HEK293 (cell line): ENCODE measurements at regions of chr18 and their contacts with region 1.

Region 1: GRCh38 chr18:76803814-76804213 is 18.5 kb upstream of the ZNF236 start:
- H3K4me3 ChIP-seq: no peak overlapping the region
- H3K27ac ChIP-seq: no peak overlapping the region
- H3K4me1 ChIP-seq: 0 out of 2 replicates have a peak, but pooled peaks cover 3% of the 10 kb centered on the region
- CTCF ChIP-seq: peak; percentile 90

Region 2: GRCh38 chr18:76544511-76545345 is 259.1 kb before region 1 on chr18:
- CTCF ChIA-PET with region 1: no interaction called
- POLR2A ChIA-PET with region 1: no interaction called
- H3K4me3 ChIP-seq: no peak overlapping the region
- H3K27ac ChIP-seq: no peak overlapping the region
- H3K4me1 ChIP-seq: peaks cover 3% of the 10 kb centered on the region; the same call in 1 of the 2 replicates
- CTCF ChIP-seq: no peak

Region 3: GRCh38 chr18:76654577-76654976 is 149.2 kb before region 1 on chr18:
- CTCF ChIA-PET with region 1: no interaction called
- POLR2A ChIA-PET with region 1: no interaction called
- H3K4me3 ChIP-seq: no peak overlapping the region
- H3K27ac ChIP-seq: no peak overlapping the region
- H3K4me1 ChIP-seq: peaks cover 5% of the 10 kb centered on the region; the same call in 1 of the 2 replicates
- CTCF ChIP-seq: no peak

Region 4: DNA sequence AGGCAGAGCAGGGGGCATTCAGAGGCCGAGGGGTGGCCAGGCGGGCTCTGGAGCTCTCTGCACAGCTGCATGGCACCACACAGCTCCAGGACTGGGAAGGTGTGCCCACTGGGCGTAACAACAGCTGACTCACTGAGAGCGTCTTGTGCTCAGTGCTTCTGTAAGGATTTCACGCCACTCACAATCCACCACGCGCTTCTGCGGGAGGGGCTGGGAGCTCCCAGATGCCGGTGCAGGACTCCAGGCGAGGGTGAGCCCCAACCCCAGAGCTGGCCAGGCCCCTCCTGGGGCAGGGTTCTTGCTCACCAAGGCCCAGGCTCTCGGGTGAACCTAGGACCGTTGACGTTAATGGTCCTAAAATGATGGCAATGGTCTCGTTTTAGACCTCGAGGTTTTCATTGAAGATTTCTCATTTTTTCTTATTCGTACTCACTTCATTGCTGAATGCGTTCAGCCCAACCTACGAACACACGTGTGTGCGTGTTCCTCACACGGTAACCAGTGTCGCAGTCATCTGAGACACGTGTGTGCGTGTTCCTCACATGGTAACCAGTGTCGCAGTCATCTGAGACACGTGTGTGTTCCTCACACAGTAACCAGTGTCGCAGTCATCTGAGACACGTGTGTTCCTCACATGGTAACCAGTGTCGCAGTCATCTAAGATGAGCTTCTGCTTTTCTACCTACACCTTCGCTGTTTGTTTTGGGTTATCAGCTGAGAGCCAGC is 19.9 kb before region 1 on chr18:
- CTCF ChIA-PET with region 1: interaction called, 52 read pairs
- POLR2A ChIA-PET with region 1: interaction called, 4 read pairs
- H3K4me3 ChIP-seq: no peak overlapping the region
- H3K27ac ChIP-seq: no peak overlapping the region
- H3K4me1 ChIP-seq: no peaks in the 10 kb centered on the region
- CTCF ChIP-seq: no peak

Region 5: DNA sequence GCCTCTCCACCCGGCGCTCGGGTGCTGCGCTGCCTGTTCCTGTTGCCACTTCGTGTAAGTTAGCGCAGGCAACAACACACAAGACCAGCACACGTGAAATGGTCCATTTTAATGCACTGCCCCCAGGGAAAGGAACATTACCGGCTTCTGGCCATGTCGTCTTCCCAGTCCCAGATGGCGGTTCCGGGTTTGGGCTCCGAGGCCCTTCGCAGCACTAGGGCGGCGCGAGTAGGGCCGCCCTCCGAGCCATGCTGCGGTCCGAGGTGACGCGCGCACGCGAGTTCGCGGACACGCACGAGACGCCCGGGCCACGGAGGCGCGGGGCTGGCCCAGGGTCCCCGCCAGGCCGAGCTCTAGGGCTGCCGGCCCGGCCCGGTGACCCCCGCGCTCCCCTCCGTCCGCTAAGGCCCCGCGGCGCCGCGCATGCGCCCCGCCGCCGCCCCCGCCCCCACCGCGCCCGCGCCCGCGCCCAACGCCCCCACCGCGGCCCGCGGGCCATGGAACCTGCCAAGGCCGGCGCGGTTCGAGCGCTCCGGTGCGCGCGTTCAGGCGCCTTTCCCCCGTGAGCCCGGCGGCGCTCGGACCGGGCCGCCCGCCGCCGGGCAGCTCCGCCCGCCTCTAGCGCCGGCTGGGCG is 18.2 kb after region 1 on chr18:
- CTCF ChIA-PET with region 1: interaction called, 67 read pairs
- POLR2A ChIA-PET with region 1: interaction called, 4 read pairs
- H3K4me3 ChIP-seq: peak overlapping the region; percentile 62
- H3K27ac ChIP-seq: peak overlapping the region; percentile 98
- H3K4me1 ChIP-seq: peaks cover 5% of the 10 kb centered on the region; the same call in 1 of the 2 replicates
- CTCF ChIP-seq: no peak

Region 6: GRCh38 chr18:76838182-76838581 is 34.4 kb after region 1 on chr18:
- CTCF ChIA-PET with region 1: interaction called, 17 read pairs
- POLR2A ChIA-PET with region 1: no interaction called
- H3K4me3 ChIP-seq: no peak overlapping the region
- H3K27ac ChIP-seq: peak overlapping the region; percentile 34; the same call in 1 of the 2 replicates
- H3K4me1 ChIP-seq: peaks cover 24% of the 10 kb centered on the region
- CTCF ChIP-seq: no peak

Region 7: DNA sequence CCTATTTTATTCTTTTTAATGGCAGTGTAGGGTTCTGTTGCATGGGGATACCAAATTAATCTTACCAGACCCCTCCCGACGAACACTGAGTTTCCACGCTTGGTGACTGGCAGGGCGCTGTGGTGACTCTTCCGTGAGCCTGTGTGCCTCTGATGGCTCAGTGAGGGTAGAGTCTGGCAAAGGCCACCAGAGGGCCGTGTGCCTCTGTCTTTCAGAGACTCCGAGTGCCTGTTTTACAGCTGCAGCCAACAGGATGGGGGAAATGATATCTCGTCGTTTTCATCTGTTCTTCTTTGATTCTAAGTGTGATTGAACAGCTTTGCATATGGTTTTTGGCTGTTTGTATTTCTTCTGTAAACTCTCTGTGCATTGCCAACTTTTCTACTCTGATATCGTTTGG is 118.3 kb after region 1 on chr18:
- CTCF ChIA-PET with region 1: interaction called, 13 read pairs
- POLR2A ChIA-PET with region 1: no interaction called
- H3K4me3 ChIP-seq: no peak overlapping the region
- H3K27ac ChIP-seq: no peak overlapping the region
- H3K4me1 ChIP-seq: no peaks in the 10 kb centered on the region
- CTCF ChIP-seq: peak; percentile 55; the same call in 1 of the 2 replicates

Region 8: GRCh38 chr18:77000527-77000926 is 196.7 kb after region 1 on chr18:
- CTCF ChIA-PET with region 1: interaction called, 15 read pairs
- POLR2A ChIA-PET with region 1: no interaction called
- H3K4me3 ChIP-seq: no peak overlapping the region
- H3K27ac ChIP-seq: no peak overlapping the region
- H3K4me1 ChIP-seq: peaks cover 3% of the 10 kb centered on the region
- CTCF ChIP-seq: peak; percentile 72